Activated naive CD4-positive, alpha-beta T cell treated with anti-CD3 and anti-CD28 coated beads for 36 hours (primary cell): ENCODE measurements at regions of chr6 and their contacts with region 1.

Region 1: GRCh38 chr6:33288921-33289748 is at the starts of genes PFDN6 and WDR46:
- DNase-seq: peak; percentile 85
- H3K4me3 Mint-ChIP-seq: peak within 1 kb of the TSS; percentile 99
- H3K27ac Mint-ChIP-seq: peak within 1 kb of the TSS; percentile 91
- H3K4me1 Mint-ChIP-seq: peaks cover 43% of the 10 kb centered on the region
- H3K27me3 Mint-ChIP-seq: no peaks in the 10 kb centered on the region
- total RNA-seq, gene PFDN6: 67.9 to 81.3 TPM
- total RNA-seq, gene WDR46: 42.5 to 42.9 TPM

Region 2: GRCh38 chr6:33197431-33198048 is 91.6 kb before region 1 on chr6:
- CTCF ChIA-PET with region 1: no interaction called
- intact Hi-C with region 1: no loop called
- DNase-seq: peak; percentile 39
- H3K4me3 Mint-ChIP-seq: peak overlapping the region; percentile 16
- H3K27ac Mint-ChIP-seq: peak overlapping the region; percentile 69
- H3K4me1 Mint-ChIP-seq: peaks cover 49% of the 10 kb centered on the region
- H3K27me3 Mint-ChIP-seq: no peaks in the 10 kb centered on the region

Region 3: GRCh38 chr6:33276864-33277662 is 12.1 kb before region 1 on chr6 and contains the start of gene B3GALT4:
- CTCF ChIA-PET with region 1: interaction called, 11 read pairs
- intact Hi-C with region 1: loop called (anchors 1 kb)
- DNase-seq: peak; percentile 73
- H3K4me3 Mint-ChIP-seq: peak within 1 kb of the TSS; percentile 99
- H3K27ac Mint-ChIP-seq: peak within 1 kb of the TSS; percentile 94
- H3K4me1 Mint-ChIP-seq: peaks cover 45% of the 10 kb centered on the region
- H3K27me3 Mint-ChIP-seq: no peaks in the 10 kb centered on the region
- total RNA-seq, gene B3GALT4: 4.4 TPM